Common myeloid progenitor, CD34-positive (primary cell): ENCODE measurements at regions of chr7 and their contacts with region 1.

Region 1: DNA sequence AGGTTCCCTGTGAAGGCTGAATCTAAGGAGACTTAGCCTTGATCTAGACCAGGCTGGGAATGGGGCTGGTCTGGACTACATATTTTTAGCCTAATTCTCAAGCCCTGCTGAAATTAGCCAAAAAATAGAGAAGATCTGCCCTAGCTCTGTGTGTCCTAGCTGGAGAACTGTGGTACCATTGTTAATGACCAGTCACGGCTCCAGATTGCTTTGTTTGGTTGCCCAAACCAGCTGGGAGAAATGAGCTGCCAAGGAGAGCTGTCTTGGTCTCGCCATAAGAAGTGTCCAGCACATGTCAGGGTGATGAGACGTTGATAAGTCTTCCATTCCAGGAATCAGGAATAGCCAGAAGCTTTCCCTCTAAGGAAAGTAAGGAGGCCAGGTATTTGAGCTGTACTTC is 20.7 kb downstream of the GBX1 start:
- DNase-seq: no peak
- H3K4me3 ChIP-seq: no peak overlapping the region
- H3K27ac ChIP-seq: no peak overlapping the region
- H3K4me1 ChIP-seq: peaks cover 0 to 2% (median under 1%) of the 10 kb centered on the region in 4 experiments
- H3K27me3 ChIP-seq: peaks cover 0 to 34% (median 15%) of the 10 kb centered on the region in 5 experiments

Region 2: DNA sequence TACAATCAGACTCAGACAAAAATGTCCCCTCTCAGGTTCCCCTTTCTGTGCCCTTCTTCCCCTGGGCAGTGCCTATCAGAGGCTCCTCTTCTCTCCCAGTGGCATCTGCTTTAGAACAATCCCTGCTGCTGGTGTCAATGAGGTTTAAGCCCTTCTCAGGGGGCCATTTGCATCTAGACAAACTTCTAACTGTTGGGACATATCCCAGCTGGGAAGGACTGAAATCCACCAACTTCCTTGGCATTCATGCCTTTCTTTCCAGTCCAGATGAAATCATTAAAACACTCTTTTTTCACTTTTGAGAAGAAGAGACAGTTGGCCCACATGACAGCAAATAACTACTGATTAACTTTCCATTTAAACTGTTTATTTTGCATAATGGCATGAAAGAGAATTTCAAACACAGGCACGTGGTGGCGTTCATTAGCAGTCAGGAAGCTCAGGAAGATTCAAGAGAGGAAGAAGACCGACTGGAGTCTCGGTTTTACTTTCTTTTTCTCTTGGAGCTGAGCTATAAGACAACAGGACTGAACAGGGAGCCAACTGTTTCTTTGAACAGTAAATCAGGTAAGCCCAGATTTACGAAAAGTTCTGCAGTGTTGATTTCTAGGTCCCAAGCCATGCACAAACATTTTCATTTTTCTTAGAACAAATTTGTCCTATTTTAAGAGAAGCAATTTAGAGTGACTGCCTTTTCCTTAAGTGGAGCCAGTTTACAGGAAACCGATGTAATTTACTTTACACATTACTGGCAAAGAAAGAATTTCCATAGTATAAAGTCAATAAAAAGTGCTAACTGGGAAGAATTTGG is 461.3 kb before region 1 on chr7 and contains the start of gene GIMAP2:
- CTCF ChIA-PET with region 1: no interaction called
- POLR2A ChIA-PET with region 1: no interaction called
- DNase-seq: peak; percentile 65 to 78 (median 71)
- H3K4me3 ChIP-seq: peak within 1 kb of the TSS; percentile 26 to 99 (median 88)
- H3K27ac ChIP-seq: peak within 1 kb of the TSS; percentile 65 to 88
- H3K4me1 ChIP-seq: peaks cover 0 to 30% (median 19%) of the 10 kb centered on the region in 4 experiments
- H3K27me3 ChIP-seq: no peaks in the 10 kb centered on the region

Region 3: GRCh38 chr7:151161757-151162156 is 15.0 kb after region 1 on chr7:
- CTCF ChIA-PET with region 1: interaction called, 14 read pairs
- POLR2A ChIA-PET with region 1: no interaction called
- DNase-seq: no peak
- H3K4me3 ChIP-seq: no peak overlapping the region
- H3K27ac ChIP-seq: no peak overlapping the region
- H3K4me1 ChIP-seq: peaks cover 0 to 4% (median 2%) of the 10 kb centered on the region in 4 experiments
- H3K27me3 ChIP-seq: peaks cover 26 to 45% (median 37%) of the 10 kb centered on the region in 5 experiments

Region 4: GRCh38 chr7:151167197-151167961 is 20.6 kb after region 1 on chr7 and contains the start of gene GBX1:
- CTCF ChIA-PET with region 1: interaction called, 14 read pairs
- POLR2A ChIA-PET with region 1: no interaction called
- DNase-seq: peak in 2 of 3 donors; percentile 42 to 55
- H3K4me3 ChIP-seq: peak within 1 kb of the TSS; percentile 22 to 67 (median 55)
- H3K27ac ChIP-seq: no peak within 1 kb of the TSS
- H3K4me1 ChIP-seq: peaks cover 0 to 18% (median 16%) of the 10 kb centered on the region in 4 experiments
- H3K27me3 ChIP-seq: peaks cover 33 to 81% (median 39%) of the 10 kb centered on the region in 5 experiments

Region 5: GRCh38 chr7:151570366-151570915 is 423.7 kb after region 1 on chr7:
- CTCF ChIA-PET with region 1: no interaction called
- POLR2A ChIA-PET with region 1: no interaction called
- DNase-seq: peak; percentile 25 to 58 (median 54)
- H3K4me3 ChIP-seq: no peak overlapping the region
- H3K27ac ChIP-seq: no peak overlapping the region
- H3K4me1 ChIP-seq: no peaks in the 10 kb centered on the region
- H3K27me3 ChIP-seq: no peaks in the 10 kb centered on the region